ENCODE measurements at regions of chr1 and their contacts with region 1.

Region 1: DNA sequence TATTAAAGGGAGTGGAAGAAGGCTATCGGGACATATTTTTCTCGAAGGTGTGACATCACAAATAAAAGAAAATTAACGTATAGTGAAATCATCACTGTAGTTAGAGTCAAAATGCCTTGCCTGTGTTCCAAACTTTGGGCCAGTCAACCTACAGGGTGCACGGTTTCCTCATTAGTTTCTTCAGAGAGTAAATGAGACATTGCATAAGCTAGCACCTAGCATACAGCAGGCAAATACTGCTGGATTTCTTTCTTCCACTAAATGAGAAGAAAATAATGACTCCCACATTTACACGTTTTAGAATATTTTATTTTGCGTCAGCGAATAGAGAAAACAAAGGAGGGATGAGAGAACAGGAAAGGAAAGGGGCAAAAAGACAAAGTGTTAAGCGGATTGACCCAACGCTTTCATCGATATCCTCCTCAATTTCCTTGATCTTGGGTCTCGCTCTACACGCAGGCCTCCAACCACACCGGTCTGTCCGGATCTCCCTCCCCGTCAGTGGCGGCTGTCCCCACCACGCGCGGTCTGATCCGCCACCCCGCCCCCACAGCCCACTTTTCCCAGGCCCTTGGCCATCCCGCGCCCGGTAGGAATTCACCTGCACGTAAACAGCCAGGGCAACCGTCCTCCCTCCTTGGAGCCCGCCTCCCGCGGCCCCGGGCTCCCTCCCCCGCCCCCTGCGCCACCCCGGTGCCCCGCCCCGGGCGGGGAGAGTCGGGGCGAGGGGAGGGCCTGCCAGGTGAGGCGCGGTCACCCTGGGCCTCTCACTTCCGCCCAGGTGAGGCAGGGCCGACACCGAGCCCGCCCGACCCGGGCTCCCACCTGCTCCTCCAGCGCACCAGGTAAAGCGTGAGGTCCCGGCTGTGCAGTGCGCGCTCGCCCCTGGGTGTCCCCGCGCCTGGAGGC is at the start of gene PATJ:
- DNase-seq: peak; percentile 76
- H3K4me3 ChIP-seq: peak within 1 kb of the TSS; percentile 65 to 98 (median 94)
- H3K27ac ChIP-seq: peak within 1 kb of the TSS; percentile 94 to 98 (median 97)
- H3K4me1 ChIP-seq: peaks cover 0 to 27% (median 19%) of the 10 kb centered on the region in 4 donors
- H3K27me3 ChIP-seq: no peaks in the 10 kb centered on the region
- CTCF ChIP-seq: no peak
- EP300 ChIP-seq: no peak
- POLR2A ChIP-seq: no peak
- total RNA-seq, gene PATJ: 21.3 to 33.2 (median 24.0) TPM

Region 2: GRCh38 chr1:61692155-61692800 is 49.7 kb before region 1 on chr1:
- intact Hi-C with region 1: no loop called
- DNase-seq: no peak
- H3K4me3 ChIP-seq: no peak overlapping the region
- H3K27ac ChIP-seq: peak overlapping the region; percentile 2 to 65 (median 52)
- H3K4me1 ChIP-seq: peaks cover 0 to 6% (median 2%) of the 10 kb centered on the region in 4 donors
- H3K27me3 ChIP-seq: no peaks in the 10 kb centered on the region
- CTCF ChIP-seq: no peak
- EP300 ChIP-seq: no peak
- POLR2A ChIP-seq: no peak

Region 3: GRCh38 chr1:61724813-61725694 is 16.9 kb before region 1 on chr1 and contains the start of gene TM2D1:
- intact Hi-C with region 1: loop called (anchors 1 kb)
- DNase-seq: peak; percentile 95
- H3K4me3 ChIP-seq: peak within 1 kb of the TSS; percentile 66 to 88 (median 76)
- H3K27ac ChIP-seq: peak within 1 kb of the TSS; percentile 85 to 88 (median 86)
- H3K4me1 ChIP-seq: peaks cover 0 to 26% (median 14%) of the 10 kb centered on the region in 4 donors
- H3K27me3 ChIP-seq: no peaks in the 10 kb centered on the region
- CTCF ChIP-seq: no peak
- EP300 ChIP-seq: peak in 1 of 4 donors; percentile 6
- POLR2A ChIP-seq: peak; percentile 72 to 88
- total RNA-seq, gene TM2D1: 63.7 to 88.5 (median 69.6) TPM

Region 4: DNA sequence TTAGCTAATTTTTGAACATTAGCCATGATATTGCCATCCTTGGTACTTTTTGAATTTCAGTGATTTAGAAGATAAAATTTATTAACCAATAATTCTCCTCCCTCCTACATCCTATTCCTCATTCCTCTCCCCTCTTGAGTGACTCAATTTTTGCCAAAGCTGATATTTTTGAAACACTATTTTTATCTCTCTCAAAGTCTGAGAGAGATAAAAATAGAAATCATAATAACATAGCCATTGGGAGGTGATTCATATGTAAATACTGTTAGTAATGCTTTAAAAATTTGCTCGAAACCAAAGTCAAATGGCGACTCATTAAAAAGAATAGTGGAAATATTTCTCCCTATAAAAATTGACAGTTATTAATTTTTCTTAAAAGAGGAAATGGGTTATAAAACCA is 97.7 kb after region 1 on chr1:
- intact Hi-C with region 1: loop called (anchors 5 kb)
- DNase-seq: no peak
- H3K4me3 ChIP-seq: no peak overlapping the region
- H3K27ac ChIP-seq: peak overlapping the region in 2 of 4 donors; percentile 55 to 80
- H3K4me1 ChIP-seq: peaks cover 0 to 60% (median 34%) of the 10 kb centered on the region in 4 donors
- H3K27me3 ChIP-seq: no peaks in the 10 kb centered on the region
- CTCF ChIP-seq: no peak
- EP300 ChIP-seq: no peak
- POLR2A ChIP-seq: no peak

Region 5: DNA sequence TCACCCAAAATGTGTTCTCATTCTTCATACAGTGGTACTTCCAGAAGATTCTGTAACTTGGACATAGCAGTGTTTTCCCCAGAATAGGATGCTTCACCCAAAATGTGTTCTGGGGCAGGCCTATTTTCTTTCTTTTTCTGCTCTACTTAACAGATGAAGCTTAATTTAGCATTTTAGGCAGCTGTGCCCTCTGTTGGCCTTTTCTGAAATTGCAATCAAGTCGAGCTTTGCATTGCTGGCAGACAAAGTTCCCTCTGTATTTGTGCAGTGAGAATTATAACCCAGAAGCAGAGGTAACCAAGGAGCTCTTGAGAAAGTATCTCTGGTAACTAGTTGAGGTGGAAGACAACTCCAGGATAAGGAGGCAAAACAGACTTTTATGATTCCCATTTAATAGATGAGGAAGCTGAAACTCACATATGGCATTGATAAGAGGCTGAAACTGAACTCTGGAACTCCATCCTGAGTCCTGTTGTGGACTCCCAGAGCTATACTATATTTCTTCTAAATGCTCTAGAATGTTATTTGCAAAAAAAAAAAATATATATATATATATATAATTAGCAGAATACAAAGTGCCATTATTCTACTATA is 402.4 kb after region 1 on chr1:
- intact Hi-C with region 1: no loop called
- DNase-seq: no peak
- H3K4me3 ChIP-seq: no peak overlapping the region
- H3K27ac ChIP-seq: no peak overlapping the region
- H3K4me1 ChIP-seq: no peaks in the 10 kb centered on the region
- H3K27me3 ChIP-seq: no peaks in the 10 kb centered on the region
- CTCF ChIP-seq: peak in 2 of 4 experiments; percentile 41 to 55
- EP300 ChIP-seq: no peak
- POLR2A ChIP-seq: no peak